ENCODE measurements at regions of chr2 and their contacts with region 1.

Region 1: GRCh38 chr2:179181002-179181401 is 83.6 kb downstream of the SESTD1 start:
- DNase-seq: no peak
- ATAC-seq: peak; percentile 47
- H3K4me3 Mint-ChIP-seq: no peak overlapping the region
- H3K27ac Mint-ChIP-seq: peak overlapping the region; percentile 65
- H3K4me1 Mint-ChIP-seq: peaks cover 25% of the 10 kb centered on the region
- H3K27me3 Mint-ChIP-seq: no peaks in the 10 kb centered on the region
- CTCF ChIP-seq: no peak

Region 2: DNA sequence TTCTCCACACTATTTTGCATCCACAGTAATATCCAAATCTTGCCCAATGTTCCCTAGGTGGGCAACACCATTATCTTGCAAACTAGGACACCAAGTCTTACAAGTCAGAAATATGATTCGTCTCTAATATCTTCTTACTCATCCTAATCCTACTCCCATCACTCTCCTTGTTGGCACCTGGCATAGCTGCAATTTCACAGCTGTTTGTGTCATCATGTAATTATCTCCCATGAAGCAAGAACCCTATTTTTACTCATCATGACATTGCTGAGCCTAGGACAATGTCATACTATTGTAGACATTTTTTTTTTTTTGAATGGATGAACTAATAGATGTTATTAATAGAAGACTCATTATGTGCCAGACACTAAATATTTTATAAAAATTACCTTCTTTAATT is 39.8 kb before region 1 on chr2:
- CTCF ChIA-PET with region 1: no interaction called
- POLR2A ChIA-PET with region 1: no interaction called
- intact Hi-C with region 1: loop called (anchors 5 kb)
- DNase-seq: no peak
- ATAC-seq: no peak
- H3K4me3 Mint-ChIP-seq: no peak overlapping the region
- H3K27ac Mint-ChIP-seq: no peak overlapping the region
- H3K4me1 Mint-ChIP-seq: no peaks in the 10 kb centered on the region
- H3K27me3 Mint-ChIP-seq: no peaks in the 10 kb centered on the region
- CTCF ChIP-seq: no peak

Region 3: DNA sequence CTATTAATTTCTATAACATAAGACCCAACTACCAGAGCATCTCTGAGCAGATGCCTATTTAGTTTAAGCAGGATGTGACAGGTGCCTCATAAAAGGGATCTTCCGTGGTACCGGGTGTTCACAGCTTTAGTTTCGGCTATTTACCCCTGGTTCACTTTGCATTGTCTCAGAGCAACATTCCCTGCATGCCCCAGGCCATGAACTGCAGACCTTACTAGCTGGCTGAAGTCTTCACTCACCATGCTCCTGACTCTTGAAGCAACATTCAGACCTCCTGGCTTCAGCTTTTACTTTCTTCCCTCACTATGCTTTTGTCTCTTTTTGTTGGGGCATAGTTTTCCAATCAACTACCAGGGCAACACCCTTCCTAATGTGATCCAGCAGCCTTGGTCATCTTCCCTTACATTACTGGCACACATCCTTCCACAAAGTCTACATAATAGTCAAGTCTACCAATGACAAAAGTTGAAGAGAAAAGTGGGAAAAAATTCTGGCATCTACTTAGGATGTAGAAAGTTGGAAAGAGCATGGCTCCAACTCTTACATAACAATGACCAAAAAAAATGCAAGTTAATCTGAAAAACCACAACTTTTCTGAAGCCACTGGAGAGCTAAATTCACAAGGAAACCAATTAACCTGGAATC is 15.5 kb before region 1 on chr2:
- CTCF ChIA-PET with region 1: no interaction called
- POLR2A ChIA-PET with region 1: no interaction called
- intact Hi-C with region 1: no loop called
- DNase-seq: no peak
- ATAC-seq: no peak
- H3K4me3 Mint-ChIP-seq: no peak overlapping the region
- H3K27ac Mint-ChIP-seq: no peak overlapping the region
- H3K4me1 Mint-ChIP-seq: peaks cover 14% of the 10 kb centered on the region
- H3K27me3 Mint-ChIP-seq: no peaks in the 10 kb centered on the region
- CTCF ChIP-seq: no peak

Region 4: GRCh38 chr2:179193759-179194394 is 12.9 kb after region 1 on chr2:
- CTCF ChIA-PET with region 1: no interaction called
- POLR2A ChIA-PET with region 1: no interaction called
- intact Hi-C with region 1: loop called (anchors 2 kb)
- DNase-seq: no peak
- ATAC-seq: no peak
- H3K4me3 Mint-ChIP-seq: no peak overlapping the region
- H3K27ac Mint-ChIP-seq: no peak overlapping the region
- H3K4me1 Mint-ChIP-seq: peaks cover 56% of the 10 kb centered on the region
- H3K27me3 Mint-ChIP-seq: no peaks in the 10 kb centered on the region
- CTCF ChIP-seq: no peak

Measured in activated B cell treated with CpG ODN at 0.5 μM for 24 hours (primary cell).